ENCODE measurements at regions of chr11 and their contacts with region 1.

Region 1: DNA sequence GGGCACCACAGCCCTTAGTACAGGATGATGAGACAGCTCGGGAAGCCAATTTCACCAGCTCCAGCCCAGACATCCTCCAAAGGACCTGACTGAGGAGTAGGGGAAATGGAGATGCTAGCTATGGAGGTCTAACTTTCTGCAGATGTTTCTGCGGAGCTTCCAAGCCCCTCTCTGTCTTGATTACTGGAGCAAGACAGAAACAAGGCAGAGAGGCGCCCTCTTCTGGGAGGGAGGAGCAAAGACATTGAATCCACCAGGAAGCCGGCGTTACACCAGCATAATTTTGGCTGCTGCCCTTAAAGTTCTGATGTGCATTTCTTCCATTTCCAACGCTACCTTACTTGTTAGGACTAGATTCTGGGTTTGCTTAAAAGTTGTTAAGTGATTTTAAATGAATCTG is 107.3 kb upstream of the HSD17B12 start:
- DNase-seq: no peak
- H3K4me3 Mint-ChIP-seq: no peak overlapping the region
- H3K27ac Mint-ChIP-seq: no peak overlapping the region
- H3K4me1 Mint-ChIP-seq: peaks cover 5% of the 10 kb centered on the region
- H3K27me3 Mint-ChIP-seq: peaks cover 59% of the 10 kb centered on the region

Region 2: GRCh38 chr11:43557553-43558110 is 15.6 kb before region 1 on chr11:
- intact Hi-C with region 1: loop called (anchors 2 kb)
- DNase-seq: no peak
- H3K4me3 Mint-ChIP-seq: no peak overlapping the region
- H3K27ac Mint-ChIP-seq: no peak overlapping the region
- H3K4me1 Mint-ChIP-seq: peaks cover 7% of the 10 kb centered on the region
- H3K27me3 Mint-ChIP-seq: peaks cover 68% of the 10 kb centered on the region